HEK293 (cell line): ENCODE measurements at regions of chr7 and their contacts with region 1.

Region 1: GRCh38 chr7:23597094-23598091 is at the start of gene CCDC126:
- H3K4me3 ChIP-seq: peak within 1 kb of the TSS; percentile 92
- H3K27ac ChIP-seq: peak within 1 kb of the TSS; percentile 73
- H3K4me1 ChIP-seq: peaks cover 17% of the 10 kb centered on the region
- CTCF ChIP-seq: no peak

Region 2: DNA sequence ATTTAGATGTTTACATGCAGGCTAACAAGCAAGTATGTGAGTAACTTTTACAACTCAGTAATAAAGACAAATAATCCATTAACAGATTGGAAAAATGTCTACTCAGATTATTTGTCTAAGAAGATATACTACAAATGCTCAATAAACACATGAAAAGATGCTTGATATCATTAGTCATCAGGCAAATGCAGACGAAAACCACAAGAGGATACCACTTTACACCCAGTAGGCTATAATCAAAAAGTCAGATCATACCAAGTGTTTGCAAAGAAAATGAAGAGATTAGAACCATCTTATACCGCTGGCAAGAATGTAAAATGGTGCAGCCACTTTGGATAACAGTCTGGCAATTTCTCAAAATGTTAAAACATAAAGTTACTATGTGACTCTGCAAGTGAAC is 214.2 kb before region 1 on chr7:
- CTCF ChIA-PET with region 1: no interaction called
- POLR2A ChIA-PET with region 1: no interaction called
- H3K4me3 ChIP-seq: no peak overlapping the region
- H3K27ac ChIP-seq: no peak overlapping the region
- H3K4me1 ChIP-seq: peaks cover 7% of the 10 kb centered on the region; the same call in 1 of the 2 replicates
- CTCF ChIP-seq: no peak

Region 3: GRCh38 chr7:23679898-23680413 is 82.6 kb after region 1 on chr7 and contains the start of gene FAM221A:
- CTCF ChIA-PET with region 1: interaction called, 3 read pairs
- POLR2A ChIA-PET with region 1: interaction called, 11 read pairs
- H3K4me3 ChIP-seq: peak within 1 kb of the TSS; percentile 40
- H3K27ac ChIP-seq: peak within 1 kb of the TSS; percentile 77
- H3K4me1 ChIP-seq: 0 out of 2 replicates have a peak, but pooled peaks cover 5% of the 10 kb centered on the region
- CTCF ChIP-seq: peak; percentile 83